IMR-90 (cell line): ENCODE measurements at regions of chr20 and their contacts with region 1.

Region 1: GRCh38 chr20:4944518-4945313 is 56.6 kb downstream of the SLC23A2 start:
- DNase-seq: peak; percentile 35
- ATAC-seq: no peak
- H3K4me3 ChIP-seq: no peak overlapping the region
- H3K27ac ChIP-seq: peak overlapping the region; percentile 65; the same call in 1 of the 2 replicates
- H3K4me1 ChIP-seq: peaks cover 37% of the 10 kb centered on the region
- H3K27me3 ChIP-seq: no peaks in the 10 kb centered on the region
- CTCF ChIP-seq: no peak
- POLR2A ChIP-seq: no peak
- RAD21 ChIP-seq: no peak

Region 2: GRCh38 chr20:4555188-4555890 is 389.4 kb before region 1 on chr20:
- CTCF ChIA-PET with region 1: no interaction called
- POLR2A ChIA-PET with region 1: no interaction called
- dilution Hi-C with region 1: no loop called
- in situ Hi-C with region 1: no loop called
- intact Hi-C with region 1: no loop called
- DNase-seq: peak; percentile 92
- ATAC-seq: peak; percentile 97
- H3K4me3 ChIP-seq: no peak overlapping the region
- H3K27ac ChIP-seq: peak overlapping the region; percentile 28; the same call in 1 of the 2 replicates
- H3K4me1 ChIP-seq: peaks cover 6% of the 10 kb centered on the region
- H3K27me3 ChIP-seq: no peaks in the 10 kb centered on the region
- CTCF ChIP-seq: no peak
- POLR2A ChIP-seq: no peak
- RAD21 ChIP-seq: peak; percentile 27

Region 3: DNA sequence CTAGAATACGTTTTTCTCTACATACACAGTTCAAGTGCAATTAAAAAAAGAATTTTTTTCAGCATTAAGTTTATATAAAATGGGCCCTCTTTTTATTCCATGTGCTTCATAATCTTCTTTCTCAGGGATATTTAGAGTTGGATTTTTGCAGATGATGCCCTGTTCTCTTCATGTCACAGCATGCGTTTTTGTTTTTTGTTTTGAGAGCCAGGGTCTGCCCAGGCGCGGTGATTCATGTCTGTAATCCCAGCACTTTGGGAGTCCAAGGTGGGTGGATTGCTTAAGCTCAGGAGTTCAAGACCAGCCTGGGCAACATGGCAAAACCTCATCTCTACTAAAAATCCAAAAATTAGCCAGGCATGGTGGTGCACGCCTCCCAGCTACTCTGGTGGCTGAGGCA is 305.9 kb before region 1 on chr20:
- CTCF ChIA-PET with region 1: no interaction called
- POLR2A ChIA-PET with region 1: interaction called, 10 read pairs
- dilution Hi-C with region 1: no loop called
- in situ Hi-C with region 1: no loop called
- intact Hi-C with region 1: no loop called
- DNase-seq: no peak
- ATAC-seq: no peak
- H3K4me3 ChIP-seq: no peak overlapping the region
- H3K27ac ChIP-seq: no peak overlapping the region
- H3K4me1 ChIP-seq: peaks cover 5% of the 10 kb centered on the region; the same call in 1 of the 2 replicates
- H3K27me3 ChIP-seq: peaks cover 10% of the 10 kb centered on the region
- CTCF ChIP-seq: no peak
- POLR2A ChIP-seq: no peak
- RAD21 ChIP-seq: no peak

Region 4: GRCh38 chr20:4766631-4767030 is 178.1 kb before region 1 on chr20:
- CTCF ChIA-PET with region 1: interaction called, 3 read pairs
- POLR2A ChIA-PET with region 1: interaction called, 10 read pairs
- dilution Hi-C with region 1: no loop called
- in situ Hi-C with region 1: no loop called
- intact Hi-C with region 1: no loop called
- DNase-seq: no peak
- ATAC-seq: no peak
- H3K4me3 ChIP-seq: no peak overlapping the region
- H3K27ac ChIP-seq: no peak overlapping the region
- H3K4me1 ChIP-seq: no peaks in the 10 kb centered on the region
- H3K27me3 ChIP-seq: no peaks in the 10 kb centered on the region; the same call in 1 of the 2 replicates
- CTCF ChIP-seq: no peak
- POLR2A ChIP-seq: no peak
- RAD21 ChIP-seq: no peak

Region 5: DNA sequence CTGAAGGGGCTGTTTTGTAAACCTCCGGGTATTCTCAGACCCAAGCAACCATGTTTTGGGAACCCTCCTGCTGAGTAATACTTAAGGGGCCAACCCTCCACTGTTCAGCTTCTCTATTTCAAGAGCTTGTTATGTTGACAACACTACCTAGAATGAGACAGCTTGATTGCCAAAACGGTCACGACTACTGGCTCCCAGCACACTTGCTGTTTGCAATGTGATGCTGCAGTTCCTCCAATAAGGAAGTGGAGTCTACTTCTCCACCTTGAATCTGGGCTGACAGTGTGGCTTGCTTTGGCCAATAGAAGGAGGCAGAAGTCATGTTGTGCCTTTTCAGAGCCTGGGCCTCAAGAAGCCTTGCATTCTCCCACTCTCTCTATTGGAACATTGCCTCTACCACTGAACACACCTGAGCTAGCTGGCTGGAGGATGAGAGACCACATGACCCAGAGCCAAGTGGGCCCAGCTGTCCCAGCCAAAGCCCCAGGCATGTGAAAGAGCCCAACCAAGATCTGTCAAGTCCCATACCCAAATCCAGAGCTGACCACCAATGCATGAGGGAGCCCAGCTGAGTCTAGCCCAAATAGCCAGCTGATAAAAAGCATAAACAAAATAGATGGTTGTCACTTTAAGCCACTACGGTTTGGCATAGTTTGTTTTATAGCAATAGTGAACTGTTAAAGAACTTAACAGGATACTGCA is 115.1 kb before region 1 on chr20:
- CTCF ChIA-PET with region 1: no interaction called
- POLR2A ChIA-PET with region 1: interaction called, 12 read pairs
- dilution Hi-C with region 1: no loop called
- in situ Hi-C with region 1: no loop called
- intact Hi-C with region 1: no loop called
- DNase-seq: no peak
- ATAC-seq: no peak
- H3K4me3 ChIP-seq: no peak overlapping the region
- H3K27ac ChIP-seq: no peak overlapping the region
- H3K4me1 ChIP-seq: peaks cover 2% of the 10 kb centered on the region; the same call in 1 of the 2 replicates
- H3K27me3 ChIP-seq: no peaks in the 10 kb centered on the region
- CTCF ChIP-seq: no peak
- POLR2A ChIP-seq: no peak
- RAD21 ChIP-seq: no peak

Region 6: DNA sequence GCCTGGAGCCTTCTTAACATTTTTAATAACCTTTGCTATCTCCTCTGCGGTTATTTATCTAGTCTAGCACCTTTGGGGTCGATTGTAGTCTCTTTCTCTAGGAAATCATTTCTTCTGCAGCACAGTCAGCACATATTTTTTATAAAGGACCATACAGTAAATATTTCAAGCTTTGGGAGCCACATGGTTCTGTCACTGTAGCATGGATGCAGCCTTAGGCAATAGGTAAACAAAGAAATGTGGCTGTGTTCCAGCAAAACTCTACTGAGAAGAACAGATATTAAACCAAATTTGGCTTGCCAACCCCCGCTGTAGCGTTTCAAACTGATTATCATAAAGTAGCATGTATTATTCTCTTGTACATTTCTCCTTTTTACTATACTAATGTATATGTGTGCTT is 39.1 kb before region 1 on chr20:
- CTCF ChIA-PET with region 1: interaction called, 4 read pairs
- POLR2A ChIA-PET with region 1: no interaction called
- dilution Hi-C with region 1: no loop called
- in situ Hi-C with region 1: no loop called
- intact Hi-C with region 1: loop called (anchors 5 kb)
- DNase-seq: peak; percentile 49
- ATAC-seq: peak; percentile 71
- H3K4me3 ChIP-seq: no peak overlapping the region
- H3K27ac ChIP-seq: no peak overlapping the region
- H3K4me1 ChIP-seq: peaks cover 5% of the 10 kb centered on the region; the same call in 1 of the 2 replicates
- H3K27me3 ChIP-seq: no peaks in the 10 kb centered on the region
- CTCF ChIP-seq: no peak
- POLR2A ChIP-seq: no peak
- RAD21 ChIP-seq: no peak

Region 7: GRCh38 chr20:4932061-4932460 is 12.7 kb before region 1 on chr20:
- CTCF ChIA-PET with region 1: no interaction called
- POLR2A ChIA-PET with region 1: interaction called, 23 read pairs
- dilution Hi-C with region 1: no loop called
- in situ Hi-C with region 1: no loop called
- intact Hi-C with region 1: no loop called
- DNase-seq: peak; percentile 55
- ATAC-seq: peak; percentile 90
- H3K4me3 ChIP-seq: no peak overlapping the region
- H3K27ac ChIP-seq: peak overlapping the region; percentile 52; the same call in 1 of the 2 replicates
- H3K4me1 ChIP-seq: peaks cover 16% of the 10 kb centered on the region
- H3K27me3 ChIP-seq: no peaks in the 10 kb centered on the region
- CTCF ChIP-seq: no peak
- POLR2A ChIP-seq: no peak
- RAD21 ChIP-seq: no peak